Activated CD4-positive, alpha-beta memory T cell treated with anti-CD3 and anti-CD28 coated beads for 36 hours (primary cell): ENCODE measurements at regions of chr2 and their contacts with region 1.

Region 1: GRCh38 chr2:197804049-197804757 is at the start of gene PLCL1:
- DNase-seq: peak; percentile 95
- H3K4me3 Mint-ChIP-seq: peak within 1 kb of the TSS; percentile 90
- H3K27ac Mint-ChIP-seq: peak within 1 kb of the TSS; percentile 67
- H3K4me1 Mint-ChIP-seq: peaks cover 38% of the 10 kb centered on the region
- H3K27me3 Mint-ChIP-seq: peaks cover 4% of the 10 kb centered on the region
- total RNA-seq, gene PLCL1: 1.7 to 1.9 TPM

Region 2: GRCh38 chr2:197615016-197615652 is 189.1 kb before region 1 on chr2:
- CTCF ChIA-PET with region 1: no interaction called
- POLR2A ChIA-PET with region 1: no interaction called
- intact Hi-C with region 1: no loop called
- DNase-seq: no peak
- H3K4me3 Mint-ChIP-seq: no peak overlapping the region
- H3K27ac Mint-ChIP-seq: no peak overlapping the region
- H3K4me1 Mint-ChIP-seq: peaks cover 9% of the 10 kb centered on the region
- H3K27me3 Mint-ChIP-seq: peaks cover 3% of the 10 kb centered on the region

Region 3: DNA sequence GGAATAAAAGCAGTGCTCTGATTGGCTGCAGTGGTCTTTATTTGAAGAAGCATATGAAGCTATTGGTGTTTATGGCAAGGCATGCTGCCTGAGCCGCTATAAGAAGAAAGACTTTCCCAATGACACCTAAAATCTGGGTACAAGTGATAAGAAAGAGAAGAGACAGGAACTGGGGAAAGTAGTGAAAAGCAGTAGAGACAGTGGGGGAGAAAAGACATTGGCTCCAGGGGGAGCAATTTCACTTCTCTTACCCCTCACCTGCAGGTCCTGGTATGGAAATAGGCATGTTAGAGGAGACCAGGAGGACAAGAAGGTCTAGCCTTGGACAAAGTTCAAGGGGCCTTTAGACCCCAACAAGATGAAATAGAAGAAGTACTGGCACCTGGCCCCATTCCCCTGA is 47.2 kb after region 1 on chr2:
- CTCF ChIA-PET with region 1: interaction called, 4 read pairs
- POLR2A ChIA-PET with region 1: no interaction called
- intact Hi-C with region 1: loop called (anchors 2 kb)
- DNase-seq: no peak
- H3K4me3 Mint-ChIP-seq: no peak overlapping the region
- H3K27ac Mint-ChIP-seq: no peak overlapping the region
- H3K4me1 Mint-ChIP-seq: peaks cover 56% of the 10 kb centered on the region
- H3K27me3 Mint-ChIP-seq: no peaks in the 10 kb centered on the region

Region 4: DNA sequence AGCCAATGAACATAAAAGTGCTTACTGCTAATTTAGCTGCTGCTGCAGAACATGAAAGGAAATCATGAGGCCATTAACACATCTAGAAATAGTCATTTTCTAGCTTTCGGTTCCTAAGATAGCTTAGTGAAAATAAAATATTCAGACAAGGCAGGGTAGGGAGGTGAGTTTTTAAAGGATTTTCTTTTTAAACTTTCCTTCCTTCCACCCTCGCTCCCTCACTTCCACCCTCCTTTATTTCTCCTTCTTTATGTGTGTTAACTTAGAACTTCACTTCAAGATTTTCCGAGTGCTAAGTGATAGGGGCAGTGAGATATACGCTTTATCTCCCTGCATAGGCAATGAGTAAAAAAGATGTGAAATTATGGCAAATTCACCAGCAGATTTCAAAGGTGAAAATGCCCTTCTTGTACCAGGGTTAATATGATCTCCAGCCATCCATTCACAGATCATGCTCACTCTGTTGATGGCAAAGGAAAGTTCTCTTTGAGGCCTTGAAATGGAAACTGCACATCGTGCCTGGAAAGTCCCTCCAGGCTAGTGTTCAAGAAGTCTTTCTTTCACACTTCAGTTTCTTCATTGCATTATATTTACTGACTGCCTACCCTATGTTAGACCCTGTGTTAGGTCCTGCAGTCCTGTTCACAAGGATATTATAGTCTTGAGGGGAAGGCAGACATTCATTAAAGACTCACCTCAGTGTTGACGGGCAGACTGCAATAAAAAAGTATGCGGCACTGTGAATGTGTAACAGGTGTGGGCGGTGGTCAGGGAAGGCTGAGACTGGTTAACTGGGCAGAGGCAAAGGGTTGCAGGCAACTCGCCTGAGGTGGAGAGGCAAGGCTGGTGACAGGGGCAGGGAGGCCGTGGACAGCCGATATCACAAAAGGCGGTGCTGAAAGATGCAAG is 201.0 kb after region 1 on chr2:
- CTCF ChIA-PET with region 1: interaction called, 3 read pairs
- POLR2A ChIA-PET with region 1: no interaction called
- intact Hi-C with region 1: loop called (anchors 5 kb)
- DNase-seq: peak; percentile 62
- H3K4me3 Mint-ChIP-seq: peak overlapping the region; percentile 61
- H3K27ac Mint-ChIP-seq: peak overlapping the region; percentile 84
- H3K4me1 Mint-ChIP-seq: peaks cover 56% of the 10 kb centered on the region
- H3K27me3 Mint-ChIP-seq: no peaks in the 10 kb centered on the region

Region 5: GRCh38 chr2:198036029-198036879 is 232.1 kb after region 1 on chr2:
- CTCF ChIA-PET with region 1: no interaction called
- POLR2A ChIA-PET with region 1: no interaction called
- intact Hi-C with region 1: no loop called
- DNase-seq: no peak
- H3K4me3 Mint-ChIP-seq: no peak overlapping the region
- H3K27ac Mint-ChIP-seq: no peak overlapping the region
- H3K4me1 Mint-ChIP-seq: peaks cover 19% of the 10 kb centered on the region
- H3K27me3 Mint-ChIP-seq: no peaks in the 10 kb centered on the region

Region 6: DNA sequence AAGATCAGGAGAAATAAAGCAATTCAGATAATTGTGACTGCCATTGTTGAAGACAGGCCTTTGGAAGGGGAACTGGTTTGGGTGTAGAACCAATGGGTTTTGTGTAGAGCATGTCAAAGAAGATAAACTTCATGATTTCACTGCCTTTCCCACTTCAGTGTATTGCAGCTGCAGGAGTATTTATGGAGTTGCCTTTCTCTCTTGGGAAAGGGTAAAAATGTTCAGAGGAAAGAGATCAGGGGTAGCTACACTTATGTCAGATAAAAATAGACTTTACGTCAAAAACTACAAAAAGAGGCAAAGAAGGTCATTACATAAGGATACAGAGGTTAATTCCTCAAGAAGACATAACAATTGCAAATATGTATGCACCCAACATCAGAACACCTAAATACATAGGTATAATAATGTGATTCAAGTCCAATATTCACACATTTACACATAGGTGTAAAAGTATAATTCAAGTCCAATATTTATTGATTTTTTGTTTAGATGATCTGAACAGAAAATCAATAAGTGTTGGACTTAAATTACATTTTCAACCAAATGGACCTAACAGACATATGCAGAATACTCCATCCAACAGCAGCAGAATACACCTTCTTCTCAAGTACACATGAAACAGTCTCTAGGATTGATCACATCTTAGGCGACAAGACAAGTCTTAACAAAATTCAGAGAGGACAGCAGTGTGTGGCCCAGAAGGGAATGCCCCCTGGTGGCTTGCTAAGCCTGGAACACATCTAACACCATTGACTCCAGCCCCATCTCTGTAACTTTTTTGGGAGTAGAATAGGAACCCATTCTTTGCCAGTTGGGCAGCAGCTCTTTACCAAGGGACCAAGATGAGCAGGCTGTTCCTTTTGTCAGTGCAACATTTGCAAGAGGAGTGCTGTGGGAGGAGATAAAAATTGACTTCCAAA is 249.8 kb after region 1 on chr2:
- CTCF ChIA-PET with region 1: interaction called, 3 read pairs
- POLR2A ChIA-PET with region 1: no interaction called
- intact Hi-C with region 1: loop called (anchors 1 kb)
- DNase-seq: peak; percentile 62
- H3K4me3 Mint-ChIP-seq: no peak overlapping the region
- H3K27ac Mint-ChIP-seq: no peak overlapping the region
- H3K4me1 Mint-ChIP-seq: peaks cover 2% of the 10 kb centered on the region
- H3K27me3 Mint-ChIP-seq: no peaks in the 10 kb centered on the region

Region 7: GRCh38 chr2:198296665-198297308 is 492.6 kb after region 1 on chr2:
- CTCF ChIA-PET with region 1: interaction called, 11 read pairs
- POLR2A ChIA-PET with region 1: no interaction called
- intact Hi-C with region 1: loop called (anchors 1 kb)
- DNase-seq: peak; percentile 67
- H3K4me3 Mint-ChIP-seq: no peak overlapping the region
- H3K27ac Mint-ChIP-seq: no peak overlapping the region
- H3K4me1 Mint-ChIP-seq: peaks cover 2% of the 10 kb centered on the region
- H3K27me3 Mint-ChIP-seq: peaks cover 9% of the 10 kb centered on the region